Posterior vena cava (tissue), 2 donors: ENCODE measurements at regions of chr17 and their contacts with region 1.

Region 1: GRCh38 chr17:64155751-64156544 is 26.0 kb upstream of the ERN1 start:
- DNase-seq: no peak

Region 2: GRCh38 chr17:64103391-64104364 is 52.3 kb before region 1 on chr17:
- intact Hi-C with region 1: no loop called
- DNase-seq: no peak

Region 3: GRCh38 chr17:64202675-64203344 is 46.9 kb after region 1 on chr17:
- intact Hi-C with region 1: no loop called
- DNase-seq: no peak

Region 4: GRCh38 chr17:64259922-64260321 is 104.0 kb after region 1 on chr17:
- intact Hi-C with region 1: no loop called
- DNase-seq: no peak

Region 5: DNA sequence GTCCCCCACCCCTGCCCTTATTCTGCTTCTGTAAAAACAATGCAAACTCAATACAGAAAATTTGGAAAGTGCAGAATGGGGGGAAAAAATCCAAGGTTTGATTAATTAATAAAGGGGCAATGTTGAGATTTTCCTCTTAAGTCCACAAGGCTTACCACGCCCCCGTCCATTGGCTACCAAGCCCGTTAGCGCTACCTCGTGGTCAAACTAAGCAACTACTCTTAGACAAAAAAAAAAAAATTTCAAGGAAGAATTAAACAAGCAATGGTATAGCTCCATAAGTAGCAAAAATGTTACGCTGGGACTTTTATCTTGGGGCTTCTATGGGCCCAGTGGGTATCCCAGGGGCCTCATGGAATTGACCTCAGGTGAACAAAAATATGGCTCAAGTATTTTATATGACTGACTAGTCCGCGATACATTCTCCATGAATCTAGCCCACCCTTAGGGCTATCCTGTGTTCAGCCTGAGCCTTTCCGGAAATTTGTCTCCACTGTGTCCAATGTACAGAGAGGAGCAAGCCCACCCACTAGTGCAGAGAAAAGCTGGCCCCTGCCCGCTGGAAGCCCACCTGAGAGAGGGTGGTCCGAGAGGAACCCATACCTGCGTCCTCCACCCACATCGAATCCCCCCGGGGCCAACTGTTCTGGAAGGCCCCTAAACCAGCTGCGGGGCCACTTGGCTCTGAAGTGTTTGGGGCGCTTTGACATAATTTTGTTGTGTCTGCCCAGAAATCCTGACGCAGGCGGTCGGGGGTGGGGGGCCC is 126.2 kb after region 1 on chr17:
- intact Hi-C with region 1: loop called in 1 of 2 experiments (anchors 10 kb)
- DNase-seq: no peak